ENCODE measurements at regions of chr2 and their contacts with region 1.

Region 1: DNA sequence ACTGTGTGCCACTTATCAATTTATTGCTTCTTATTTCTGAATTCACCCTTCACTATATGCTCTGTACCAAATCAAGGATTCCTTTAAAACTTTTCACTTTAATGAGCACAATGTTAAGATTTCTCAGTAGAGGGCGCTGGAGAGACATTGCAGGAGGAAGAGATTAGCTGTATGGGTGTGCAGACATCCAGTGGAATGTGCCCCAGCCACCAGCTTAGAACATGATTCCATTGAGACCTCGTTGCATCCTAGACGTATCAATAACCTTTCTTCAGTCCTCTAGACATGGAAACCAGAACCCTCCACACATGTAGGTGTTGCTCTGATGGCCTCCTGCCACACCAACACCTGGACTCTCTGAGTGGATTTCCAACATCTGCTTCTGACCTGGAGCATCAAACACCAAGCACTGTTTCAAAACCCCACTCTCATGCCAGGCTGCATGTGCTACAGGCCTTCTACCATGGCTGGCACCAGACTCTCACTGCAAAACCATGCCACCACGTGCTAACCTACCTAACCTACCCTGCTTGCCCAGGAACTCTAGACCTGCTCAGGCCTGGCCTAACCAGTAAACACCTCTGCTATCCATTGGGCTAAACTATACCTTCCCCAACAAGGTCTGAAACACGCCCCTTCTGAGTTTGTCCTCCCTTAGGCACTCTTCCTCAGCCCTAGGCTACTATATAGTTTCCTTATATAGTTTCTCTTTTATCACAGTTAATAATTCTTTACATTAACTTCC is 633.2 kb upstream of the PKDCC start:
- DNase-seq: peak; percentile 44 to 64
- H3K4me3 ChIP-seq: no peak overlapping the region
- H3K4me3 Mint-ChIP-seq: no peak overlapping the region
- H3K27ac Mint-ChIP-seq: no peak overlapping the region
- H3K4me1 ChIP-seq: no peaks in the 10 kb centered on the region
- H3K4me1 Mint-ChIP-seq: no peaks in the 10 kb centered on the region
- H3K27me3 ChIP-seq: no peaks in the 10 kb centered on the region
- H3K27me3 Mint-ChIP-seq: peaks cover 3% of the 10 kb centered on the region
- CTCF ChIP-seq: peak; percentile 63 to 65

Region 2: GRCh38 chr2:41431756-41432155 is 17.1 kb after region 1 on chr2:
- CTCF ChIA-PET with region 1: no interaction called
- POLR2A ChIA-PET with region 1: no interaction called
- intact Hi-C with region 1: no loop called
- DNase-seq: no peak
- H3K4me3 ChIP-seq: no peak overlapping the region
- H3K4me3 Mint-ChIP-seq: no peak overlapping the region
- H3K27ac Mint-ChIP-seq: no peak overlapping the region
- H3K4me1 ChIP-seq: no peaks in the 10 kb centered on the region
- H3K4me1 Mint-ChIP-seq: no peaks in the 10 kb centered on the region
- H3K27me3 ChIP-seq: no peaks in the 10 kb centered on the region
- H3K27me3 Mint-ChIP-seq: peaks cover 4% of the 10 kb centered on the region
- CTCF ChIP-seq: no peak

Region 3: DNA sequence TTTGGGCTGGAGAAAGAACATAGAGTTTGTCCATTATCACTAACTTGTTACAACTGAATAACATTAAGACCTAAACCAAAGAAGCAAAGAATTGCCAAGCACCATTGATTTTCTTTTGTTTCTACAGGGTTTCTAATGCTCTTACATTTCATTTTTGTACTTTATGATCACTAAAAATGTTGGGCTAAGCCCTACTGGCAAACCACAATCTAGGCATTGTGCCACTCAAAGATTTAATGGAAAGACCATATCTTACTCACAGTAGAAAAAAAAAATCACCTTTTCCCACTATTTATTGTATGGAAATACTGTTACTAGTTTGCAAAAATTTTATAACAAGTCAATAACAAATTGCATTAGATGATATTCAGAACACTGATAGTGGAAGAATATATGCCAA is 185.8 kb after region 1 on chr2:
- CTCF ChIA-PET with region 1: no interaction called
- POLR2A ChIA-PET with region 1: no interaction called
- intact Hi-C with region 1: loop called (anchors 10 kb)
- DNase-seq: no peak
- H3K4me3 ChIP-seq: no peak overlapping the region
- H3K4me3 Mint-ChIP-seq: no peak overlapping the region
- H3K27ac Mint-ChIP-seq: no peak overlapping the region
- H3K4me1 ChIP-seq: no peaks in the 10 kb centered on the region
- H3K4me1 Mint-ChIP-seq: no peaks in the 10 kb centered on the region
- H3K27me3 ChIP-seq: no peaks in the 10 kb centered on the region
- H3K27me3 Mint-ChIP-seq: no peaks in the 10 kb centered on the region
- CTCF ChIP-seq: no peak

Region 4: DNA sequence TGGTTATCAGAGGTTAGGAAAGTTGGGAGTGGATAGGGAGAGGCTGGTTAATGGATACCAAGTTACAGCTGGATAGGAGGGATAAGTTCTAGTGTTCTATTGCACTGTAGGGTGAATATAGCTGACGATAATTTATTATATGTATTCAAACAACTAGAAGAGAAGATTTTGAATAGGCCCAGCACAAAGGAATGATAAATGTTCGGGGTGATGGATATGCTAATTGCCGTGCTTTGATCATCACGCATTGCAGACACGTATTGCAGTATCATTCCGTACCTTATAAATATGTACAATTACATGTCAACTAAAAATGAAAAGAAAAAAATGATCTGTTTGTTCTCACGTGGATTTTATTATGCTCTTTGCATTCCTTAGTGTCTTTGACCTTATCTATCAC is 264.0 kb after region 1 on chr2:
- CTCF ChIA-PET with region 1: no interaction called
- POLR2A ChIA-PET with region 1: no interaction called
- intact Hi-C with region 1: no loop called
- DNase-seq: no peak
- H3K4me3 ChIP-seq: no peak overlapping the region
- H3K4me3 Mint-ChIP-seq: no peak overlapping the region
- H3K27ac Mint-ChIP-seq: no peak overlapping the region
- H3K4me1 ChIP-seq: no peaks in the 10 kb centered on the region
- H3K4me1 Mint-ChIP-seq: no peaks in the 10 kb centered on the region
- H3K27me3 ChIP-seq: no peaks in the 10 kb centered on the region
- H3K27me3 Mint-ChIP-seq: peaks cover 3% of the 10 kb centered on the region
- CTCF ChIP-seq: no peak

Region 5: GRCh38 chr2:41698678-41699422 is 284.2 kb after region 1 on chr2:
- CTCF ChIA-PET with region 1: interaction called, 22 read pairs
- POLR2A ChIA-PET with region 1: no interaction called
- intact Hi-C with region 1: loop called (anchors 1 kb)
- DNase-seq: peak in 1 of 2 experiments; percentile 47
- H3K4me3 ChIP-seq: no peak overlapping the region
- H3K4me3 Mint-ChIP-seq: no peak overlapping the region
- H3K27ac Mint-ChIP-seq: no peak overlapping the region
- H3K4me1 ChIP-seq: no peaks in the 10 kb centered on the region
- H3K4me1 Mint-ChIP-seq: no peaks in the 10 kb centered on the region
- H3K27me3 ChIP-seq: peaks cover under 1% of the 10 kb centered on the region; the same call in 1 of the 2 replicates
- H3K27me3 Mint-ChIP-seq: peaks cover 19% of the 10 kb centered on the region
- CTCF ChIP-seq: peak; percentile 83 to 84